Prostate gland (tissue), 2 donors: ENCODE measurements at regions of chr12 and their contacts with region 1.

Region 1: GRCh38 chr12:93591137-93591868 is 18.8 kb downstream of the SOCS2 start:
- DNase-seq: peak; percentile 60
- H3K4me3 ChIP-seq: peak overlapping the region; percentile 34 to 47
- H3K27ac ChIP-seq: peak overlapping the region; percentile 80 to 89
- H3K4me1 ChIP-seq: no peaks in the 10 kb centered on the region
- H3K27me3 ChIP-seq: no peaks in the 10 kb centered on the region
- CTCF ChIP-seq: no peak
- POLR2A ChIP-seq: peak; percentile 32

Region 2: DNA sequence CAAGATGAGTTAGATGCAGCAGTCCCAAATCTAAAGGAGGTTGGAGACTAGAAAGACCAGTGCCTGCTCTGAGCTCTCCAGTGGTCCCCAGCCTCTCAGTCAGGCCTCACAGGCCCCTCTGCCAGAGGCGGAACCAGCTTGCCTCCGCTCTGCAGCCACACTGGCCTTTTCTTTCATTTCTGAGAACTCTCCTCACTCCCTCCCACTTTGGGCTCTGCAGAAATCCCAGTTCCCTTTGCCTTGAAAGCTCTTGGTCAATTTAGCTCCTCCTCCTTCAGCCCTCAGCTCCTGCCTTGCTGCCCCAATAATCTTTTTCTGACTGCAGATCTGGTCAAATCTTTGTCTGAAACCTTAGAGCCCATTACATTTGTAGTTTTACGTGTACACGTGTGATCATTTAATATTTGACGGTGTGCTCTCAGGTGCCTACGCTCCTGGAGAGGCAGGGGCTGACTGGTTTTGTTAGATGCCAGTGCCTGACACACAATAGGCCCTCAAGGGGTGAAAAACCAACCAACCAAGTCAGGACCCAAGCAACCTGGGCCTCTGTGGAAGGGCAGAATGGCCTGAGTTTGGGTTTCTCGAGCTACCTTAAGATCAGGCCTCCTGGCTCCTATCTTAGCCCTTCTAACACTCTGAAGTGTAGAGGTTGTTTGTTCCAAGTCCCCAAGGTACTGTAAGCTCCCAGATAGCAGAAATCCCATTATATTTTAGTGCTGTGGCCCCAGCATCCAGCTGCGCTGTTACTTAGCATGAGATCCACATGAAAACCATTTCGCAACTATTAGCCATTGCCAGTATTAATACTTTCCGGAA is 214.7 kb before region 1 on chr12:
- intact Hi-C with region 1: no loop called
- DNase-seq: no peak
- H3K4me3 ChIP-seq: peak overlapping the region in 1 of 2 donors; percentile 87
- H3K27ac ChIP-seq: peak overlapping the region; percentile 94 to 97
- H3K4me1 ChIP-seq: no peaks in the 10 kb centered on the region
- H3K27me3 ChIP-seq: no peaks in the 10 kb centered on the region
- CTCF ChIP-seq: no peak
- POLR2A ChIP-seq: no peak

Region 3: DNA sequence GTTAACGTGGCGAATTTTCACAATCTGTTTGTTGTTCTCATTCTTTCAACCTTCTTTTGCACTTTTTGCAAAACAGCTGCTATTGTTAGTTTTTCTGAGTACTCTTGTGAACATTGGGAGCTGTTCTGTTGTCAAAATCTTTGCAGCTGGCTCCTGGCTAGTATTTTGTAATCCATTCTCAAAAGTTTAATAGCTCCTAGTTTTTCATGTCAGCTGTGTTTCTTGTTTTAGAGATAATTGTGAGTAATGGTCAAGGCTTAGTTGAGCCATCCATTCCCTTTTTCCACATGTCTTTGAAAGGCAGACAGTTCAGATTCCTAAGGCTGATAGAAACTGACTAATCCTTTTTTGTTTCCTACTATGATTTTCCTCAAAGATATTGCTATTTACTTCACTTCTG is 46.8 kb after region 1 on chr12:
- intact Hi-C with region 1: loop called (anchors 5 kb)
- DNase-seq: no peak
- H3K4me3 ChIP-seq: no peak overlapping the region
- H3K27ac ChIP-seq: no peak overlapping the region
- H3K4me1 ChIP-seq: no peaks in the 10 kb centered on the region
- H3K27me3 ChIP-seq: no peaks in the 10 kb centered on the region
- CTCF ChIP-seq: no peak
- POLR2A ChIP-seq: no peak

Region 4: DNA sequence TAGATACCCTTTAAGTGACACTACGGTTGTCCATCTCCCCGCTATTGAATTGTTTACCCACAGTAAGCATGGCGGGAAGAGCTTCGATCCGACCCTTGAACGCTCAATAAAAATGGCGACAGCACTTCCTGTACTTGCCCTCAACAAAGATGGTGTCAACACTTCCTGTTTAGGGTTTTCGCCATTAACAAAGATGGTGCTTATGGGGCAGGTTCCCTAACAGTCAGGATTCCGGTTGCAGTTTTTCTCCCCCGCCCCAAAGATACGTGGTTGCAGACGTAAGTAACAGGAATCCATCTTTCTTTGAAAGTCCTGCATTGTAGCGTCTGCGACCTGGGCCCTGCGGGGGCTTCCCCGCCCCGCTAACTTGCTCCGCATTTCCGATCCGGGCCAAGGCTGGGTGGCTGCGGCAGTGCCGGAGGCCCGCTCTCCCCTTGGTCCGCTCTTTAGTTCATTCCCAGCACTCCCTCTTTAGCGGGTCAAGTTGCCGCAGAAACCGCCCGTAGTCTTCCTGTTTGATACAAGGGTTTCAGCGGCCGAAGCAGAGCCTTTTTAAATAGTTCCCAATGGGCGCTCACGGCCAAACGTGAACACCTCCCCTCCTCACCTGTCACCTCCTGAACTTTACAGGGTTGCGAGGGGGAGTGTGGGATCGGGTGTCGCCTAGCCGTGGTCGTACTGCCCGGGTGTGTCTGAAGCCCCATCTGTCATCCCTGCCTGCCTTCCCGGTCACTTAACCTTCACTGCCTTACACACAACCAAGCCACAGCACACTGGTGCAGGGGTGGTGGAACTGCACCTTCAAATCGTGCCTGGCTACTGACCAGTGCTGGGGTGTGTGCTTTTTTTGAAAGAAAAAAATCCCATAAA is 86.1 kb after region 1 on chr12 and contains the start of gene CRADD:
- intact Hi-C with region 1: loop called (anchors 5 kb)
- DNase-seq: peak; percentile 84
- H3K4me3 ChIP-seq: peak within 1 kb of the TSS; percentile 51 to 61
- H3K27ac ChIP-seq: peak within 1 kb of the TSS; percentile 97 to 98
- H3K4me1 ChIP-seq: no peaks in the 10 kb centered on the region
- H3K27me3 ChIP-seq: no peaks in the 10 kb centered on the region
- CTCF ChIP-seq: peak in 1 of 4 experiments; percentile 15
- POLR2A ChIP-seq: peak; percentile 55
- total RNA-seq, gene CRADD: 38.9 to 42.4 TPM

Region 5: DNA sequence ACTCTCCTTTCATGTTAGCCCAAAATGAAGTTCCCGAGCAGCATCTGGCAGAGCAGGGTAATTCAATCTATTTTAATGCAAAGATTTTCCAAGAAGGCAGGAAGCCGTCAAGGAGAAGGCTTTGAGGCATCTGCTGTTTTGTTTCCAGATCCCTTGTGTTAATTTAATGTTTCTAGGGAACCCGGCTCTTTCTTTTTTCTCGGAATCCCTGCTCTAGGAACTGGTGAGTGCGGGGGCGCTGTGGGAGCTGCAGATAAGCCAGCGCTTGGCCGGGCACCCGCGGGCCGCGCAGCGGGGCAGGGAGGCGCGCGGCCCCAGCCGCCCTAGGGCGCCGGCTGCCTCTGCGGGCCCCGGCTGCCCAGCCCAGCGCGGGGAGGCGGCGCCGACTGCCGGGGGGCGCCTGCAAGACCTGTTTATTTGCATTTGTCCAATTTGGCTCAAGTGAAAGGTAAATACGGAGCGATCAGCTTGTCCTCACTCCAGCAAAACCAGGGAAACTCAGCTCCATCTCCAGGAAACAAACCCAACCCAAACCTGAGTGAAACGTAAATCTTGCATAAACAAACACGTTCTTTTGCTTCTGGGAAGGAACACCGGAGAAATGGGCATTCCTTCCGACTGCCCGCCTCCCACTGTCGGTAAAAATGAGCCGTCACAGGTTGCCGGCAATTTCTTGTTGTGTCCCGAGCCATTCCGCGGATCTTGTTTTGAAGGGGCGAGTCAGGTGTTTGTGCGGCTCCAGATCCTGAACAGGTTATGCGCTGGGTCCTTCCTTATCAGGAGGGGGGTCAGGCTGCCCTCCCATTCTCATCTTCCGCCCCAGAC is 151.0 kb after region 1 on chr12:
- intact Hi-C with region 1: loop called (anchors 5 kb)
- DNase-seq: peak; percentile 86
- H3K4me3 ChIP-seq: peak overlapping the region; percentile 35 to 38
- H3K27ac ChIP-seq: peak overlapping the region; percentile 89 to 95
- H3K4me1 ChIP-seq: peaks cover 13% of the 10 kb centered on the region
- H3K27me3 ChIP-seq: no peaks in the 10 kb centered on the region
- CTCF ChIP-seq: peak in 3 of 4 experiments; percentile 34 to 74 (median 65)
- POLR2A ChIP-seq: peak; percentile 17

Region 6: GRCh38 chr12:93925585-93926205 is 334.4 kb after region 1 on chr12:
- intact Hi-C with region 1: no loop called
- DNase-seq: no peak
- H3K4me3 ChIP-seq: no peak overlapping the region
- H3K27ac ChIP-seq: no peak overlapping the region
- H3K4me1 ChIP-seq: no peaks in the 10 kb centered on the region
- H3K27me3 ChIP-seq: no peaks in the 10 kb centered on the region
- CTCF ChIP-seq: no peak
- POLR2A ChIP-seq: no peak